ENCODE measurements at regions of chr1 and their contacts with region 1.

Region 1: DNA sequence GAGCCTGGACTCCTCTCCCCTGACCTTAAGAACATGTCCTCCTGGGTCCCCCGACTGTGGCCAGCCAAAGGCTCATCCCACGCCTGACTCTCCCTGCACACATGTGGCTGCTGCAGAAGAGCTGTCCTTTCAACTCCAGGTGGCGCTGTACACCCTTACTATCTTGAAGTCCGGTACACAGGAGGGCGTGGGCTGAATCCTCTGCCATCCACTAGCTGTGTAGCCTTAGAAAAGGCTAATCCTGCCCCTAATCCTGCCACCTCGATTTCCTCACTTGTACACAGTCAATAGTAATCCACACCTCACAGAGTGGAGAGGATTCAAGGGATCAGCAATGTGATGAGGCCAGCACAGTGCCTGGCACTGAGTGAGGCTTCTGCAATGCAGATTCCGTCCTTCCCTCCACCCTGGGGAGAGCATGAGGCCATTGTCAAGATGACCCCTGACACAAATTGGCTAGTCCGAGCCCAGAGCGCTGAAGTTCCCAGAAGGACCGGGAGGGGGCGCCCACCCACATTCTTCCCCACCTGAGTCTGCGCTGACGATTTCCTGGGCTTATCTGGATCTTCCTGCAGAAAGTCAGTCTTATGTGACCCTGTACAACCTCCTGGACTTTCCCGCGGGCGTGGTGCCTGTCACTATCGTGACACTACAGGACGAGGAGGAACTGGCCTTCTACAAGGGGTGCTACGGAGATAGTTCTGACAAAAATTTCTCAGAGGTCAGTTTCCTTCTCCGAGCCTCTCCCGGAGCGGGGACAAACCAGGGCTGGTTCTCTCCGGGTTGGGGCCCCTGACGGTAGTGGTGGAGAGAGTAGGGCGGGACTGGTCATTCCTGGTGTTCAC is 47.1 kb upstream of the DMBX1 start:
- DNase-seq: peak; percentile 56
- H3K4me3 Mint-ChIP-seq: peak overlapping the region; percentile 81
- H3K27ac Mint-ChIP-seq: peak overlapping the region; percentile 64
- H3K4me1 Mint-ChIP-seq: peaks cover 13% of the 10 kb centered on the region
- H3K27me3 Mint-ChIP-seq: peaks cover 38% of the 10 kb centered on the region

Region 2: GRCh38 chr1:46223472-46223943 is 219.0 kb before region 1 on chr1:
- intact Hi-C with region 1: no loop called
- DNase-seq: peak; percentile 34
- H3K4me3 Mint-ChIP-seq: no peak overlapping the region
- H3K27ac Mint-ChIP-seq: no peak overlapping the region
- H3K4me1 Mint-ChIP-seq: no peaks in the 10 kb centered on the region
- H3K27me3 Mint-ChIP-seq: peaks cover 3% of the 10 kb centered on the region

Region 3: GRCh38 chr1:46406881-46407608 is 35.5 kb before region 1 on chr1:
- intact Hi-C with region 1: loop called (anchors 5 kb)
- DNase-seq: no peak
- H3K4me3 Mint-ChIP-seq: no peak overlapping the region
- H3K27ac Mint-ChIP-seq: no peak overlapping the region
- H3K4me1 Mint-ChIP-seq: no peaks in the 10 kb centered on the region
- H3K27me3 Mint-ChIP-seq: no peaks in the 10 kb centered on the region

Region 4: GRCh38 chr1:46425726-46426125 is 16.8 kb before region 1 on chr1:
- intact Hi-C with region 1: no loop called
- DNase-seq: no peak
- H3K4me3 Mint-ChIP-seq: no peak overlapping the region
- H3K27ac Mint-ChIP-seq: no peak overlapping the region
- H3K4me1 Mint-ChIP-seq: no peaks in the 10 kb centered on the region
- H3K27me3 Mint-ChIP-seq: peaks cover 2% of the 10 kb centered on the region

Region 5: DNA sequence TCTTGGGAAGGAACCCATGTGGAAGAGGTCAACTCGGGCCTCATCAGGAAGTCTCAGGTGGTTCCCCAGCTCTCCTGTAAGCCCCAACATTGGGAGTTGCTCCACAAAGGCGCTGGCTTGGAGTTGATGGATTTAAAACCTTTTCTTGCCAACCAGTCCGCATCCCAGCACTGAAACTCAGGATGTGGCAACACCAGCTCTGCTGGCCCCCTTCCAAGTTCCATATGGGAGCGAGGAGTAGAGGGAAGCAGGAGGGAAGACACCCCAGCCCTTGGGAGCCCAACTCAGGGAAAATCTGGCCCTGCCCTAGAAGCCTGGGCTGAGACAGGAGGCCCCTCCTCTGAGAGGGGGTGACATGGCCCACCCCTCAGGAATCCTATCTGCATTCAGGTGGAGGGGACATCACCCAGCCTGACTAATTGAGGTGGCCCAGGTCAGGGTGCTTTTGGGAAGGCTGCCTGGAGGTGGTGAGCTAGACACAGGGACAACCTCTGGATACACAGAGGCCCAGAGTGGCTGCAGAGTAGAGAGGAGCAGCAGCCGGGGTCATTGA is 13.9 kb after region 1 on chr1:
- intact Hi-C with region 1: no loop called
- DNase-seq: no peak
- H3K4me3 Mint-ChIP-seq: no peak overlapping the region
- H3K27ac Mint-ChIP-seq: no peak overlapping the region
- H3K4me1 Mint-ChIP-seq: no peaks in the 10 kb centered on the region
- H3K27me3 Mint-ChIP-seq: peaks cover 32% of the 10 kb centered on the region

Region 6: GRCh38 chr1:46477153-46477929 is 34.8 kb after region 1 on chr1:
- intact Hi-C with region 1: loop called (anchors 1 kb)
- DNase-seq: peak; percentile 63
- H3K4me3 Mint-ChIP-seq: no peak overlapping the region
- H3K27ac Mint-ChIP-seq: no peak overlapping the region
- H3K4me1 Mint-ChIP-seq: no peaks in the 10 kb centered on the region
- H3K27me3 Mint-ChIP-seq: peaks cover 47% of the 10 kb centered on the region

Region 7: GRCh38 chr1:46503421-46503820 is 60.9 kb after region 1 on chr1:
- intact Hi-C with region 1: no loop called
- DNase-seq: no peak
- H3K4me3 Mint-ChIP-seq: no peak overlapping the region
- H3K27ac Mint-ChIP-seq: no peak overlapping the region
- H3K4me1 Mint-ChIP-seq: no peaks in the 10 kb centered on the region
- H3K27me3 Mint-ChIP-seq: peaks cover 34% of the 10 kb centered on the region

Region 8: GRCh38 chr1:46724991-46725735 is 282.6 kb after region 1 on chr1:
- intact Hi-C with region 1: loop called (anchors 1 kb)
- DNase-seq: peak; percentile 56
- H3K4me3 Mint-ChIP-seq: no peak overlapping the region
- H3K27ac Mint-ChIP-seq: no peak overlapping the region
- H3K4me1 Mint-ChIP-seq: no peaks in the 10 kb centered on the region
- H3K27me3 Mint-ChIP-seq: peaks cover 16% of the 10 kb centered on the region

Measured in activated T-helper 1 cell treated with anti-CD3 and anti-CD28 coated beads, Interleukin-12 subunit alpha, Interleukin-12 subunit beta, Interleukin-2, Interleukin-4 antibody, amounts not matched to agents 30 ng/mL and 10 ng/mL and 1 ng/mL, durations not matched to agents 14 hours and 24 hours and 36 hours (primary cell).